PC-3 (cell line): ENCODE measurements at regions of chr7 and their contacts with region 1.

Region 1: GRCh38 chr7:23357190-23358093 is 58.3 kb downstream of the MALSU1 start:
- DNase-seq: peak; percentile 87
- ATAC-seq: peak; percentile 85
- H3K4me3 ChIP-seq: peak overlapping the region; percentile 54; the same call in 1 of the 2 replicates
- H3K27ac ChIP-seq: peak overlapping the region; percentile 85
- H3K4me1 ChIP-seq: peaks cover 38% of the 10 kb centered on the region
- H3K27me3 ChIP-seq: no peaks in the 10 kb centered on the region
- CTCF ChIP-seq: peak; percentile 75

Region 2: GRCh38 chr7:23264916-23265458 is 92.5 kb before region 1 on chr7:
- CTCF ChIA-PET with region 1: no interaction called
- POLR2A ChIA-PET with region 1: no interaction called
- intact Hi-C with region 1: no loop called
- DNase-seq: no peak
- ATAC-seq: no peak
- H3K4me3 ChIP-seq: no peak overlapping the region
- H3K27ac ChIP-seq: no peak overlapping the region
- H3K4me1 ChIP-seq: no peaks in the 10 kb centered on the region
- H3K27me3 ChIP-seq: no peaks in the 10 kb centered on the region
- CTCF ChIP-seq: no peak

Region 3: DNA sequence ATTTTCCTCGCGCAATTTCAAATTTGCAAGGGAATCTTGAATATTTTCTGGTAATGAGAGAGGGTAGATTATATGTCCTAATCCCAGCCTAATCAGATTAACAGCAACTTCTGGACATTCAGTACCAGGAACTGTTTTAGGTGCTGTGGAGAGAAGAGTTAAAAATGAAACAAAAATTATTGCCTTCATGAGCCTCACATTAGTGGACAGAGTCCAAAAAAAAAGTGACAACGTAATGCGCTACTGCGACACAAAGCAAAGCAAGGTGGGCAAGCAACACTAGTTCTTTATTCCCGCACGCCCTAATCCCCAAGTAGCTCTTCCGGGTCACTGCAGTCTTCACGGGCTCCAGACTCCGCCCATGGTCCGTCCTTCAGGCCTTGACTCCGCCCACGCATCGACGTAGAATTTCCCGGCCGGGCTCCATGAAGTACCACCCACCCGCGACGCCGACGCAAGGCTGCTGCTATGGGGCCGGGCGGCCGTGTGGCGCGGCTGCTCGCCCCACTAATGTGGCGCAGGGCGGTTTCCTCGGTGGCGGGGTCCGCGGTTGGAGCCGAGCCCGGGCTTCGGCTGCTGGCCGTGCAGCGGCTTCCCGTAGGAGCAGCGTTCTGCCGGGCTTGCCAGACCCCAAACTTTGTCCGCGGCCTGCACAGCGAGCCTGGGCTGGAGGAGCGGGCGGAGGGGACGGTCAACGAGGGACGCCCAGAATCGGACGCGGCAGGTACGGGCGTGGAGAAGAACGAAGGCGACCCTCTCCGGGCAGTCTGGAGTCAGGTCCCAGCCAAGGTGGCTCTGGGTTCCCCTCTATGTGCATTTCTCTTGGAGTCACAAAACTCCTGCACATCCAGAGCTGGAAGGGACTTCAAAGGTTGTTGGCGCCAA is 58.3 kb before region 1 on chr7 and contains the start of gene MALSU1:
- CTCF ChIA-PET with region 1: interaction called, 3 read pairs
- POLR2A ChIA-PET with region 1: no interaction called
- intact Hi-C with region 1: loop called (anchors 1 kb)
- DNase-seq: peak; percentile 96
- ATAC-seq: peak; percentile 99
- H3K4me3 ChIP-seq: peak within 1 kb of the TSS; percentile 97
- H3K27ac ChIP-seq: peak within 1 kb of the TSS; percentile 50
- H3K4me1 ChIP-seq: peaks cover 22% of the 10 kb centered on the region
- H3K27me3 ChIP-seq: no peaks in the 10 kb centered on the region
- CTCF ChIP-seq: no peak
- total RNA-seq, gene MALSU1: 284 and 306 TPM in 2 replicates

Region 4: DNA sequence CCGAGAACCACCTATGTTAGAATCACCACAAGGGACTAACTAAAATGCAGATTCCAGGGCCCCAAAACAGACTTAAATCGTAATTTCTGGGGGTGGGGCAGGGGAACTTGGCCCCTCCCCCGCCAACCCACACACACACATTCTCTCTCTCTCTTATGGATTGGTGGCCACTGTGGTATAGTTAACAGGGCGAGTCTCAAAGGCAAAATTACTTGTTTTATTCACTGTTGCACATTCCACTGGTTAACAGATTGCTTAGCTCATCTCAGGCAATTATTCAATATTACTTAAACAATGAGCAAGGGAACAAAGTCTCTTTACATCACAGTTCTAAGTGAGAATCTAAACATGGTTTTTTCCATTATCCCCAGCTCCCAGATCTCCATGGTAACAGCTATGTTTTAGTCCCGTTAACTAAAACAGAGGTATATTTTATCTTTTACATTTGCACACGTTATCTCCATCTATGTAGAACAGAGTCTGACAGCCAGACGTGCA is 74.3 kb after region 1 on chr7:
- CTCF ChIA-PET with region 1: interaction called, 3 read pairs
- POLR2A ChIA-PET with region 1: no interaction called
- intact Hi-C with region 1: loop called (anchors 2 kb)
- DNase-seq: no peak
- ATAC-seq: no peak
- H3K4me3 ChIP-seq: no peak overlapping the region
- H3K27ac ChIP-seq: no peak overlapping the region
- H3K4me1 ChIP-seq: 0 out of 2 replicates have a peak, but pooled peaks cover 5% of the 10 kb centered on the region
- H3K27me3 ChIP-seq: no peaks in the 10 kb centered on the region
- CTCF ChIP-seq: no peak

Region 5: DNA sequence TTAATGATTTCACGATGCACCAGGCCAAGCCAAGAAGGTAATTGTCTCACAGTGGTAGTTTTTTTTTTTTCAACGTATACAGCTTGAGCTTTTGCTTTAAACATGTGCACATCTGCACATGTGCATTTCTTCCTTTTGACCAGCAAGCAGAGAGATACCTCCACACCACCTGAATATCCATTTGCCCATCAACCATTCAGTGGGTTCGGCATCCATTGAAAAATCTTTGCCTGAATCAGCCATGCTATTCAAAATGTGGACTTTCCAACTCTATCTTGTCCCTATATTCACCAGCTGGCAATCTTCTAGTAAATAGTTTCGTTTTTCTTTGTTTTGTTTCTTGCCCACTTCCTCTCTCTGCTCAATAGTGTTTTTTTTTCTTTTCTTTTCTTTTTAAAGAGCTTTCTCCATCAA is 182.1 kb after region 1 on chr7:
- CTCF ChIA-PET with region 1: interaction called, 6 read pairs
- POLR2A ChIA-PET with region 1: interaction called, 13 read pairs
- intact Hi-C with region 1: no loop called
- DNase-seq: no peak
- ATAC-seq: no peak
- H3K4me3 ChIP-seq: no peak overlapping the region
- H3K27ac ChIP-seq: no peak overlapping the region
- H3K4me1 ChIP-seq: no peaks in the 10 kb centered on the region
- H3K27me3 ChIP-seq: no peaks in the 10 kb centered on the region
- CTCF ChIP-seq: no peak